ENCODE measurements at regions of chr21 and their contacts with region 1.

Region 1: DNA sequence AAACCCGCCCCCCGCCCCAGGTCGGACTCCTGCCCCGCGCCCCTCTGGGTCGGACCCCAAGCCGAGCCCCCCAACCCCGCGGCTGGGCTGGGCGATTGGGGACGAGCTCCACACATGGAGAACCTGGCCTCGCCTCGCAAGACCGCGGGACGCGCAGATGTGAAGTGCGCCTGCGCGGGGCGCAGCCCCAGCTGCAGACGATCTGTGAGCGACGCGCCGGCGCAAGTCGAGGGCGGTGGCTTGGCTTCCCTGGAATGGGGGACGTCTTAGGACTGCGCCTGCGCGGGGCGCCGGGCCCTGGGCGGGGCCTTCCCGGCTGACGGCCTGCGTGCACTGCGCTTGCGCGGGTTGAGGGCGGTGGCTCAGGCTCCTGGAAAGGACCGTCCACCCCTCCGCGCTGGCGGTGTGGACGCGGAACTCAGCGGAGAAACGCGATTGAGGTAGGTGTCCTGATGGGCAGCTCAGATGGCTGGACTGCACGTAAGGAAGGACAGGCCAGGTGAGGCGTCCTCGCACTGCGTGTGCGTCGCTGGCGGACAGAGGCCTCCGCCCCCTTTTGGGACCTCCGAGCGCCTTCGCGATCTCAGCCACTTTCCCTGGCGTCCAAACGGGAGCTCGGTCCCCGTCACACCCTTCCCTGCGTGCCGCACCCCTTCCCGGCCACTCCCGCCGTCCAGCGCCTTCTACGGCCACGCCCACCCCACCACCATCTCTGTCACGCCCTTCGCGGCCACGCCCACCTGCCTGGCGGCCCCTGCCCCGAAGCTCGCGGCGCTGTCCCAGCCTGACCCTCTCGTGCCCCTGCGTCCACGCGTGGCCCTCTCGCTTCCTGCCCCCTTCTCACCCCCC is at the start of gene PRMT2:
- H3K4me3 ChIP-seq: peak within 1 kb of the TSS; percentile 62
- H3K27ac ChIP-seq: peak within 1 kb of the TSS; percentile 85
- H3K4me1 ChIP-seq: peaks cover 10% of the 10 kb centered on the region; the same call in 1 of the 2 replicates
- CTCF ChIP-seq: peak; percentile 77

Region 2: DNA sequence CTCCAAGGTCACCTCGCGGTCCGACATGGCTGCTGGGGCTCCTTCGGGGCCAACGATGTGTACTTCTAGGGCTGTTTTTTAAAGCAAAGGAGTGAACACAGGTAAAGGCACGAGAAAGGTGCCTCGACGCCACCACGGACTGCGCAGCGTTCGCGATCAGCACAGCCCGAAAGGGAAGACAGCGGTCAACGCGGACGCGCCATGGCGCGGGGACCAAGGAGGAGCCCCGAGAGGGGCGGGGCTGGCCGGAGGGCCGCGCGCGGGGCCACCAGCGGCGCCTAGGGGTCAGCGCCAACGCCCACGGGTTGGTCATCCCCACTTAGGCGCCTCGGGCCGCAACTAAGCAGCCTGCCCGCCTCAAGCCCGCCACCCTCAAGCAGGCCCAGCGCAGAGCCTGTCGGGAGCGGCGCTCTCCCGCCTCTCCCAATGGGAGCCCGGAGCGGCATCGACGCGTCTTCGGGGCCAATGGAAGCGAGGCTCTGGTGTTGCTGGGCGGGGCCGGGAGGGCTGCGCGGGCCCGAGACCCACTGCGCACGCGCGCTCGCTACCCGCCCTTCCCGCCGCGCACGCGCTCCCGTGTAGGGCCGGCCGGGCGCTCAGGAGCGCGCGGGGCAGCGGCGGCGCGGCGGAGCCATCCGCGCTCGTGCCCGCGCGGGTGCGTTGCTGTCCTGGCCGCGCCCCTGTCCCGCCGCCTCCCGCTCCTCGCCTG is 177.1 kb before region 1 on chr21 and contains the start of gene DIP2A:
- CTCF ChIA-PET with region 1: interaction called, 5 read pairs
- POLR2A ChIA-PET with region 1: interaction called, 11 read pairs
- H3K4me3 ChIP-seq: peak within 1 kb of the TSS; percentile 86
- H3K27ac ChIP-seq: peak within 1 kb of the TSS; percentile 92
- H3K4me1 ChIP-seq: 0 out of 2 replicates have a peak, but pooled peaks cover 3% of the 10 kb centered on the region
- CTCF ChIP-seq: peak; percentile 84

Region 3: DNA sequence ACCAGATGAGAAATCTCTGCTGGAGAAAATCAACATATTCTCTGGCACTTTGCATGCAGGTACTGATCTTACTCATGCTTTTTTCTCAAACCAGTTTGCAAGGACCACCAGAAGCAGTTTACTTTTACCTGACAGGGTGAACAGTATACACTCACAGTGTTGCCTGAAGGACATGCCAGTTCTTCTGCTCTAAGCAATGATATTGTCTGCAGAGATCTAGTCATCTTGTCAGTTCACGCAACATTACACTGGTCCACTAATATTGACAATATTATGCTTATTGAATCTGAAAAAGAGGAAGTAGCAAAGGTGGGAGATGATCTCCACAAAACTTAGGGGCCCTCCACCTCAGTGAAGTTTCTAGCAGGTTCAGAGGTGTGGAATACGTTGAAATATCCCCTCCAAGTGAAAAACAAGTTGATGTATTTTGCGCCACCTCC is 26.9 kb before region 1 on chr21:
- CTCF ChIA-PET with region 1: interaction called, 5 read pairs
- POLR2A ChIA-PET with region 1: interaction called, 11 read pairs
- H3K4me3 ChIP-seq: no peak overlapping the region
- H3K27ac ChIP-seq: no peak overlapping the region
- H3K4me1 ChIP-seq: no peaks in the 10 kb centered on the region
- CTCF ChIP-seq: no peak

Region 4: GRCh38 chr21:46650476-46651098 is 15.0 kb after region 1 on chr21:
- CTCF ChIA-PET with region 1: interaction called, 4 read pairs
- POLR2A ChIA-PET with region 1: interaction called, 14 read pairs
- H3K4me3 ChIP-seq: no peak overlapping the region
- H3K27ac ChIP-seq: no peak overlapping the region
- H3K4me1 ChIP-seq: no peaks in the 10 kb centered on the region
- CTCF ChIP-seq: no peak

Region 5: DNA sequence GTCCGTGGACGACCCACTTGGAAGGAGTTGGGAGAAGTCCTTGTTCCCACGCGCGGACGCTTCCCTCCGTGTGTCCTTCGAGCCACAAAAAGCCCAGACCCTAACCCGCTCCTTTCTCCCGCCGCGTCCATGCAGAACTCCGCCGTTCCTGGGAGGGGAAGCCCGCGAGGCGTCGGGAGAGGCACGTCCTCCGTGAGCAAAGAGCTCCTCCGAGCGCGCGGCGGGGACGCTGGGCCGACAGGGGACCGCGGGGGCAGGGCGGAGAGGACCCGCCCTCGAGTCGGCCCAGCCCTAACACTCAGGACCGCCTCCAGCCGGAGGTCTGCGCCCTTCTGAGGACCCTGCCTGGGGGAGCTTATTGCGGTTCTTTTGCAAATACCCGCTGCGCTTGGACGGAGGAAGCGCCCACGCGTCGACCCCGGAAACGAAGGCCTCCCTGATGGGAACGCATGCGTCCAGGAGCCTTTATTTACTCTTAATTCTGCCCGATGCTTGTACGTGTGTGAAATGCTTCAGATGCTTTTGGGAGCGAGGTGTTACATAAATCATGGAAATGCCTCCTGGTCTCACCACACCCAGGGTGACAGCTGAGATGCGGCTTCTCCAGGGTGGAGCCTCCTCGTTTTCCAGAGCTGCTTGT is 32.3 kb after region 1 on chr21:
- CTCF ChIA-PET with region 1: interaction called, 4 read pairs
- POLR2A ChIA-PET with region 1: interaction called, 13 read pairs
- H3K4me3 ChIP-seq: peak overlapping the region; percentile 42
- H3K27ac ChIP-seq: no peak overlapping the region; the same call in 1 of the 2 replicates
- H3K4me1 ChIP-seq: no peaks in the 10 kb centered on the region
- CTCF ChIP-seq: no peak

Measured in HEK293 (cell line).